Posterior cingulate gyrus (tissue), 11 donors: ENCODE measurements at regions of chr1 and their contacts with region 1.

Region 1: DNA sequence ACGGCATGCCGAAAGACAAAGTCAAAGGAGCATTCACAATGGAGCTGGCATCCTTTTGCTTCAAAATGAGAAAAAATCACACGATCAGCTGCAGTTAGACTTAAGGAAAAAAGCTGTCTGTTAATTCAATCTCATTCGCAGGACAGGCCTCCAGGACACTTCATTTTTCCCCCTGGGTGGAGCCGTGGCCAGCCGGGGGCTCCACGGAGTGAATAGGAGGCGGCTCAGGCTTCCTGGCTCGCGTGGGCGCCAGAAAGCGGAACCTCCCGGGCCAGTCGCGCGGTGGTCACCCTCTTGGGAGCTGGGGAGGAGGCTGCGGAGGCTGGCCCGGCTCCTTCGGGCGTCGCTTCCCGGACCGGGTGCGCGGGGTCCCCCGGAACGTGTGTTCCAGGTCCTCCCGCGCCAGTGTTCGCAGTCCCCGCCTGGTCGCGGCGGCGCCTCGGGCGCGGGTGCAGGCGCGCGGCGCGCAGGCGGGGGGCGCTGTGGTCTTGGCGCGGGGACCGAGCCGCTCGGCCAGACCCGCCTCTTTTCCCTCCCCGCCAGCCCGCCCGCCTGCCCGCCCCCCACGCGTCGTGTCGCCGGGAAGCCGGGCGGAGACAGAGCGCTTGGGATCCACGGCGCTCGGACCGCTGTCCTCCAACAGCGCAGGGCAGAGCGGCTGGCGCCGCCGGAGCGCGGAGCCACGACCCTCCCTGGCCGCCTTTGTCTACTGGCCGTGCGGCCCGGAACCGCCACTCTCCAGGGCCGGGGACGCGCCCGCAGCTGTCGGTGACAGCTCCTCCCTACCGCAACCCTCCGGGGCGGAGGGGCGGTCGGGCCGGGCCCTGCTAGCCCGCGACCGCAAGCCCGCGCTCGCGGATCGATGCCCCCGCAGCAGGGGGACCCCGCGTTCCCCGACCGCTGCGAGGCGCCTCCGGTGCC is at the start of gene RHOU:
- DNase-seq: peak; percentile 74 to 98 (median 80)

Region 2: DNA sequence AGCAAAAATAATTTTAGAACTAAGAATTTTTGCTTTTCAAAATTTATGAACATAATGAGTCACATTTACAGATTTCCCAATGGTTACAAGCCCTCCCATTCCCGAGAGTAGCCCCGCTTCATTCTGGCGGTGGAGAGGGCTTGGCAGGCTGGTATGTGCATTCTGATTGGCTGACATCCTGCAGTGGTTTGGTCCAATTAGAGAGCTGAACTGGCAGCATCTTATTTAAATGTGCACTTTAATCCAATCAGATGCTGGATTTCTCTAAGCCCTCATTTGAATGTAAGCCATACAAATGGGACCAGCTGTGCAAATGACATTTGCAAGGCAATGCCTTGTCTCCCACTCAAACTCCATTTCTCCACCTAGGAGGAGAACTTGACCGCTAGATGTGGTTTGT is 300.5 kb before region 1 on chr1:
- intact Hi-C with region 1: no loop called
- DNase-seq: no peak

Region 3: DNA sequence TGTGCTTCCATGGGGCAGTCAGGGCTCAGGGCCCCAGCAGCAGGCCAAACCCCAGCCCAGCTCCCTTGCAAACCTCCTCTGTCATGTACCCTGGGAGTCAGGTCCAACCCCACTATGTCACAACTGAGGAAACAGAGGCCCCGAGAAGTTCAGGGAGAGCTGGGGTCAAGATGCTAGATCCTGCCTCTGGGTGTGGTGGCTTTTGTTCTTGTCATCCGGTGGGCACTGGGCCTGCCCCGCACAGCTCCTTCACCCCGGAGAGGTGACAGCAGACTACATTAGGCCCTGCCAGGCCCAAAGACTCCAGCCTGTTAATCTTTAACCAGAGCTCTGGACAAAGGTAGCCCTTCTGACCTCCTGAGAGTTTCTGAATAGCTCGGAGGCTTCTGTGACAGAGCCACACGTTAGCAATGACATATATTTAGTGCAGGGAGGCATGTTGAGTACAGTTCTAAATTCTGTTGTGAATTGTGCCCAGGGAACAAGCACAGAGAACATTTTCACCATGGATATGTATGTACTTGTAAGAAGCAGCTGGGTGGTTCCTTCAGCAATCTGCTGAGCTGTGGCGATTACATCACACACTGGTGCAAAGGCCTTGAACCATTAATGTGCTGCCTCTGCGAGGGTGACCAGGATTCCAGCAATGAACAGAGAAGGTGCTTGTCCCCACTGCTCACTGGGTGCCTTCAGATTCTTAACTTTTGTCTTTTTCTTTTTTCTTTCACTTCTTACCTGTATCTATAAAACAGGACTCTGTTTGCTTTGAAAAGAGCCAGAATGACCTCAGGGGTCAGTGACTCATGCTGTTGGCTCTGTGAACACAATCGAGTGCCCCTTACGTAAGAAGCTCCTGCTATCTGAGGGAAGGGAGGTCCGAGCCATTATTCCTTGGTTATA is 102.9 kb after region 1 on chr1:
- intact Hi-C with region 1: loop called (anchors 10 kb)
- DNase-seq: no peak

Region 4: GRCh38 chr1:228902781-228903433 is 167.8 kb after region 1 on chr1:
- intact Hi-C with region 1: loop called (anchors 5 kb)
- DNase-seq: peak; percentile 33 to 95 (median 72)

Region 5: GRCh38 chr1:229003233-229004031 is 268.3 kb after region 1 on chr1:
- intact Hi-C with region 1: loop called (anchors 1 kb)
- DNase-seq: peak; percentile 73 to 98 (median 88)

Region 6: GRCh38 chr1:229156872-229157271 is 421.7 kb after region 1 on chr1:
- intact Hi-C with region 1: loop called (anchors 10 kb)
- DNase-seq: peak in 2 of 10 donors; percentile 17 to 30

Region 7: DNA sequence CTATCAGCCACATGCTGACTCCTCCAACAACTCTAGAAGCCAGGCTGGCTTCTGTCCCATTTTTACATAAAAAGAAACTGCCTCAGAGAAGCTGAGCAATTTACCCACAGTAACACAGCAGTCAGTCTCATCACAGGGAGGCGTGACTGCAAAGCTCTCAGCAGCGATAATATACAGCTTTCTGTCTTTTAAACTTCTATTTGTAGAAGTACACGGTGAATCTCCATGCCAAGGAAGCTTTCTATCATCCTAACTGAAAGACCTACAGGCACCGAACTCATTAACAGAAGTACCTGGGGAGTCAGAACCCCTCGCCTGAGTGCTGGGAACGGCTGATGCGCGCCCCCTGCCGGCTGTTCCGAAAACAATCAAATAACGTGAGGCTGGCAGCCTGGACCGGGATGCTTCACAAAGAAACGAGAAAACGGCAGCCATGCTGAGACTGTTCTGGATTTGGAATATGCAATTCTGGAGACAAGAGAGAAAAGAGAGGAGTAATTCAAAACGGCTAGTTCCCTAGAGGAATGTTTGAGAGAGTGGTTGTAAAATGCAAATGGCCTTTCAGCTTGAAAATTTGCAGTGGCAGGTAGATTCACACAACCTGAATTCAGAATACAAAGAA is 492.3 kb after region 1 on chr1:
- intact Hi-C with region 1: loop called (anchors 1 kb)
- DNase-seq: peak; percentile 78 to 98 (median 92)